Posterior vena cava (tissue), 2 donors: ENCODE measurements at regions of chr2 and their contacts with region 1.

Region 1: GRCh38 chr2:15826273-15826717 is 114.1 kb upstream of the MYCN start:
- DNase-seq: no peak

Region 2: GRCh38 chr2:16861530-16862196 is 1035.4 kb after region 1 on chr2:
- intact Hi-C with region 1: loop called in 1 of 2 experiments (anchors 5 kb)
- DNase-seq: no peak